Panc1 (cell line): ENCODE measurements at regions of chr14 and their contacts with region 1.

Region 1: DNA sequence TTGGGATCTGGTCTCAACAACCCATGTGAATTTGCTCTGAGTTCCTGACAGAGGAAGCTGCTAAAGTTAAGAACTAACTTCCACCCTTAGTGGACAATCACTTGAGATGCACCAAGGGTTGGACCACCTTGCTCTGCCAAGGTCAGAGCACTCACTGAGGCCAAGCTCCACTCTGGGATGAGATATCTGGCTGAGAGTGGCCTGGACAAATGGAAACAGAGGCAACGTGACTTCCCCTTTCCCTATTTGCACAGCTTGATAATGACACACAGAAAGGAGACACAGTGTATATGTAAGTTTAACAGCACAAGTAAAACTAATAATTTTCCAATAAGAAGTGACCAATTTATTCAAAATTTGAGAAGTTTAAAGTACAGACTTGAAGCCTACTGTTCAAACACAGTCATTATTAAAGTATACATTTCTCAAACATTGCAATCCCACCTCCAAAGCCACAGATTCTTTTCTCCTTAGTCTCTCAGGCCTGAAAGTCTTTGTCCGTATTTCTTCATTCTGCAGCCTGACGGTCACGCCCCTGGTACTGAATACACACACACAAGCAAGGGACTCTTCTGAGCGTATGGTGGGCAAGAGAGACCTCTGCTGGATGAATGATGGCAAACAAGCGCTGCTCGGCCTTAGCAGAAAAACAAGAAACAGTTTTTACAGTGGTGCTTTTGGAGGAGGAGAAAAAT is 28.6 kb downstream of the TMEM30B start:
- DNase-seq: peak; percentile 83
- ATAC-seq: peak; percentile 98
- H3K4me3 ChIP-seq: no peak overlapping the region
- H3K27ac ChIP-seq: no peak overlapping the region
- H3K4me1 ChIP-seq: no peaks in the 10 kb centered on the region
- H3K27me3 ChIP-seq: no peaks in the 10 kb centered on the region
- CTCF ChIP-seq: peak; percentile 80

Region 2: DNA sequence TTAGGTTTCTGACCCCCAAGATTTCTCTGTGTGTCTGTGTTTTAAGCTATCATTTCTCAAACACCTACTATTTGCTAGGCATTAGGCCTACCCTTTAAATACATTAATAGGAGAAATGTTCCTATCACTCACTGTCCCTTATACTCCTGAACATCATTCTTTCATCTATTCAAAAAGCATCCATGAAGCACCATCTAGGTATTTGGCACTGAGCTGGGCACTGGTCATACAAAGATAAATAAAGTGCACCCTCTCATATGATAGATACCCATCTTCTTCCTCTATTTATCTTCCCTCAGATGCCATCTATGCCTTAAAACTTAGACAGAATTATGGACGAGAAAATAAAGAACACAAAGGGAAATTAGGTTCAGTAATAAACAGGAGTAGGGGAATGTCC is 623.6 kb before region 1 on chr14:
- CTCF ChIA-PET with region 1: no interaction called
- POLR2A ChIA-PET with region 1: no interaction called
- in situ Hi-C with region 1: no loop called
- intact Hi-C with region 1: loop called (anchors 5 kb)
- DNase-seq: no peak
- ATAC-seq: no peak
- H3K4me3 ChIP-seq: no peak overlapping the region
- H3K27ac ChIP-seq: no peak overlapping the region
- H3K4me1 ChIP-seq: 0 out of 2 replicates have a peak, but pooled peaks cover 3% of the 10 kb centered on the region
- H3K27me3 ChIP-seq: no peaks in the 10 kb centered on the region
- CTCF ChIP-seq: no peak

Region 3: GRCh38 chr14:61003571-61003970 is 248.9 kb before region 1 on chr14:
- CTCF ChIA-PET with region 1: no interaction called
- POLR2A ChIA-PET with region 1: no interaction called
- in situ Hi-C with region 1: no loop called
- intact Hi-C with region 1: no loop called
- DNase-seq: no peak
- ATAC-seq: no peak
- H3K4me3 ChIP-seq: no peak overlapping the region
- H3K27ac ChIP-seq: no peak overlapping the region
- H3K4me1 ChIP-seq: no peaks in the 10 kb centered on the region
- H3K27me3 ChIP-seq: no peaks in the 10 kb centered on the region
- CTCF ChIP-seq: no peak

Region 4: DNA sequence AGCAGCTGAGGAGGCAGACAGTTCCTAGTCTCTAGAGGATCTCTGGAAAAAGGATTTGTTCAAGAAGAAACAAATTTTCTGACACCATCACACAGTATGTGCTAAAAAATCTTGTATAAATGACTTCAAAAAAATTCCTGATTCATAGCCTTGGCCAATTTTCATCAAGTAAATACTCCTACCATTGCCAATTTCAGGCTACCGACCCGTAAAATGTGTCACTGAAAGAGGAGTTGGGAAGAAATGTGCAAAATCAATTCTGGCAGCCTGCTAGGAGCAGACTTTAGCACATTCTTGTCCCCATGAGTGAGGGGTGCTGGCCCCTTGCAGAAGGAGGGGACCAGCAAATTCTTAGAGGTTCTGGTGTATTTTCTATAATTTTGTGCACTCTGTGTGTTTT is 80.8 kb before region 1 on chr14:
- CTCF ChIA-PET with region 1: no interaction called
- POLR2A ChIA-PET with region 1: no interaction called
- in situ Hi-C with region 1: no loop called
- intact Hi-C with region 1: no loop called
- DNase-seq: no peak
- ATAC-seq: no peak
- H3K4me3 ChIP-seq: no peak overlapping the region
- H3K27ac ChIP-seq: no peak overlapping the region
- H3K4me1 ChIP-seq: no peaks in the 10 kb centered on the region
- H3K27me3 ChIP-seq: no peaks in the 10 kb centered on the region
- CTCF ChIP-seq: no peak